Activated CD8-positive, alpha-beta T cell treated with anti-CD3 and anti-CD28 coated beads for 36 hours (primary cell): ENCODE measurements at regions of chr14 and their contacts with region 1.

Region 1: GRCh38 chr14:64891839-64892375 is 12.2 kb upstream of the SPTB start:
- DNase-seq: peak; percentile 39
- ATAC-seq: peak; percentile 89
- H3K4me3 Mint-ChIP-seq: no peak overlapping the region
- H3K27ac Mint-ChIP-seq: no peak overlapping the region
- H3K4me1 Mint-ChIP-seq: peaks cover 2% of the 10 kb centered on the region
- H3K27me3 Mint-ChIP-seq: peaks cover 3% of the 10 kb centered on the region
- CTCF ChIP-seq: peak; percentile 69

Region 2: DNA sequence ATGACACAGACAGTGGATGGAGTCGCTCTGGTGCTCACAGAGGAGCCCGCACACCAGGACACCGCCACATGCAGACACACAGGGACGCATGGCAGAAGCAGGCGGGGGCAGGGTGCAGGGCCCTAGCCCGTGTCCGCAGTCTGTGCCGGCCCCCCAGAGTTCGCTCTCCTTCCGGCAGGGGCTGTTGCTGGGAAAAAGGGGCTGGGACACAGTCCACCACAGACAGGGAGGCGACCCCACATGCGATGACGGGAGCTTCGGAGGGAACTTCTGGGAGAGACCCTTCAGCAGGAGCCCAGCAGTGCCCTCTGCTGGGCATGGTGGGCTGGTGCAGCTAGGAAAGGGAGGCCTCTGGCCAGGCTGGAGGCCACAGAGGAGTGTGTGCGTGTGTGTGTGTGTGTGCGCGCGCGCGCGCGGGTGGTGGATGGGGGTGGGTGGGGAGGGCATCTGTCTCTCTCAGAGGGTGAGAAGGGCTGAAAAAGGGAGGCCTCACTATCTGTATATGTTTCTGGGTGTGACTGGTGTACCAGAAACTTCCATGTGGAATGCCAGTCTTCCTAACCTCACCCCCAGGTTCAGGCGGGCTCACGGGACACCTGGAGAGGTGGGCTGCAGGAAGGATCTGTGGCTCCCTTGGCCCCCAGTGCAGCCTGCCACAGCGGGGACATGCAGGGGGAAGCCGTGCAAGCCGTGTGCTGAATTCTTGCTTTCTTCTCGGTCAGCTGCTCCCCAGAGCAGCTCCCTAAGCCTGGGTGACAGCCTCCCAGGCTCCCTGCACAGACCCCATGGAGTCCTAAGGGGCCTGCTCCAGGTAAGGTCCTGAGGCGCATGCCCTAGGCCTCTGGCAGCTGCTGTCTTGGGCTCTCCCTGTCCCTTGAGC is 127.0 kb before region 1 on chr14:
- CTCF ChIA-PET with region 1: interaction called, 27 read pairs
- POLR2A ChIA-PET with region 1: no interaction called
- intact Hi-C with region 1: loop called (anchors 5 kb)
- DNase-seq: peak; percentile 71
- ATAC-seq: peak; percentile 93
- H3K4me3 Mint-ChIP-seq: peak overlapping the region; percentile 51
- H3K27ac Mint-ChIP-seq: no peak overlapping the region
- H3K4me1 Mint-ChIP-seq: peaks cover 7% of the 10 kb centered on the region
- H3K27me3 Mint-ChIP-seq: peaks cover 7% of the 10 kb centered on the region
- CTCF ChIP-seq: peak; percentile 82

Region 3: GRCh38 chr14:64800000-64800399 is 91.9 kb before region 1 on chr14:
- CTCF ChIA-PET with region 1: interaction called, 44 read pairs
- POLR2A ChIA-PET with region 1: no interaction called
- intact Hi-C with region 1: no loop called
- DNase-seq: peak; percentile 18
- ATAC-seq: no peak
- H3K4me3 Mint-ChIP-seq: no peak overlapping the region
- H3K27ac Mint-ChIP-seq: no peak overlapping the region
- H3K4me1 Mint-ChIP-seq: no peaks in the 10 kb centered on the region
- H3K27me3 Mint-ChIP-seq: no peaks in the 10 kb centered on the region
- CTCF ChIP-seq: peak; percentile 23

Region 4: DNA sequence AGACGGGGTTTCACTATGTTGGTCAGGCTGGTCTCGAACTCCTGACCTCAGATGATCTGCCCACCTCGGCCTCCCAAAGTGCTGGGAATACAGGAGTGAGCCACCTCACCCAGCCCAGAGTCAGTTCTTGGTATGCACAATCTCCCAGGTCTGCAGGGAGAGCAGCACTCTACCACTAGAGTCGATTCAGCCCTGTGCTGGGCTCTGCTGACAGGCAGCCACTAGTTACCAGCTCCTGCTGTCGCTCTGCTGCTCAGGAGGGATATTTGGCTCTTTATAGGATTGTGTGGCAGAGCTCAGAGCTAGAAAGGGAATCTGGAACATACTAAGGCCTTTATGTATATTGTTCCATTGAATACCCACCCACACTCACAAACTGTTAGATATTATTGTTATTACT is 56.5 kb before region 1 on chr14:
- CTCF ChIA-PET with region 1: interaction called, 15 read pairs
- POLR2A ChIA-PET with region 1: interaction called, 3 read pairs
- intact Hi-C with region 1: no loop called
- DNase-seq: no peak
- ATAC-seq: no peak
- H3K4me3 Mint-ChIP-seq: no peak overlapping the region
- H3K27ac Mint-ChIP-seq: no peak overlapping the region
- H3K4me1 Mint-ChIP-seq: no peaks in the 10 kb centered on the region
- H3K27me3 Mint-ChIP-seq: peaks cover 6% of the 10 kb centered on the region
- CTCF ChIP-seq: no peak

Region 5: DNA sequence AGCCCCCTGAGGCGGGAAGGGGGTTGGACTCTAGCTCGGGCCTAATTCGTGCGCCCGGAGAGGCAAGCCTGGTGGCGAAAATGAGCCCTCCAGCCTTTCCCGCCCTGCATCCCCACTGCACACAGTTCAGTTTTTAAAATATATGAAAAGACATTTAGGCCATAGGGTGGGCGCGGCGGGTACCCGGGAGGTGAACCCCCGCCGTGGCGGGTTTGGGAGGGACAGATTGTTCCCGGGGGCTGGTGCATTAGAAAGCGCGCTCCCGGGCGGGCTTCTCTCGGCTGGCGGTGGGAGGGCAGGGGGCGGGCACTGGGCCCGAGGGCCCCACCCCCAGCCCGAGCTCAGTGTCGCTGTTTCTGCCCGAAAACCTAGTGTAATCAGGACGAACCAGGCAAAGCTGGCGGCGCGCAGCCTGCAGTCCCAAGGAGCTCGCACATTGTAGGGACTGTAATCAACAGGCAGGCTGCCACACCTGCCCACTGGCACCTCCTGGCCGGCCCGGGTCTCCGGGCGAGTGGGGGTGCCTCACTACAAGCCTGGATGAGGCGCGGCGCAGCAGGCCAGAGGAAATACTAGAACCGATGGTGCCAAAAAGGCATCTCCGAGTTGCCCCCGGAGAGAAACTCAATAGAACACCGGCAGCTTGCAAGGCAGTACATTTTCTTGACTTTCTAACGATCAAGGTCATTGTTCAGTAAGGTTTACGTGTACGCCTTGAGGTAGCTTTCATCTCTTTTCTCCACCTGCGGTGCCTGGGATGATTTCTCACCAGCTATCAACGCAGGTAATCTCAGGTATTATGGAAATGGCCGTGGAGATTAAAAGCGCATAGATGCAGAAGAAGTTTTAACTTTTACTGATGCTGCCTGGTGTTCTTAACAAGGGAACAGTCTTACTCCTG is 11.4 kb before region 1 on chr14:
- CTCF ChIA-PET with region 1: interaction called, 92 read pairs
- POLR2A ChIA-PET with region 1: no interaction called
- intact Hi-C with region 1: no loop called
- DNase-seq: peak; percentile 73
- ATAC-seq: peak; percentile 88
- H3K4me3 Mint-ChIP-seq: peak overlapping the region; percentile 77
- H3K27ac Mint-ChIP-seq: no peak overlapping the region
- H3K4me1 Mint-ChIP-seq: peaks cover 2% of the 10 kb centered on the region
- H3K27me3 Mint-ChIP-seq: peaks cover 42% of the 10 kb centered on the region
- CTCF ChIP-seq: no peak

Region 6: GRCh38 chr14:64986578-64987571 is 95.0 kb after region 1 on chr14 and contains the start of gene FNTB:
- CTCF ChIA-PET with region 1: interaction called, 11 read pairs
- POLR2A ChIA-PET with region 1: no interaction called
- intact Hi-C with region 1: no loop called
- DNase-seq: peak; percentile 96
- ATAC-seq: peak; percentile 94
- H3K4me3 Mint-ChIP-seq: peak within 1 kb of the TSS; percentile 78
- H3K27ac Mint-ChIP-seq: peak within 1 kb of the TSS; percentile 94
- H3K4me1 Mint-ChIP-seq: peaks cover 43% of the 10 kb centered on the region
- H3K27me3 Mint-ChIP-seq: peaks cover 7% of the 10 kb centered on the region
- CTCF ChIP-seq: peak; percentile 75
- total RNA-seq, gene FNTB: 18.8 to 23.5 TPM